Activated CD4-positive, alpha-beta T cell treated with anti-CD3 and anti-CD28 coated beads for 36 hours (primary cell): ENCODE measurements at regions of chr2 and their contacts with region 1.

Region 1: GRCh38 chr2:9656270-9656766 is 25.5 kb upstream of the YWHAQ start:
- DNase-seq: peak; percentile 86
- ATAC-seq: peak; percentile 87
- H3K4me3 Mint-ChIP-seq: peak overlapping the region; percentile 26
- H3K27ac Mint-ChIP-seq: peak overlapping the region; percentile 89
- H3K4me1 Mint-ChIP-seq: peaks cover 37% of the 10 kb centered on the region
- H3K27me3 Mint-ChIP-seq: peaks cover 10% of the 10 kb centered on the region

Region 2: DNA sequence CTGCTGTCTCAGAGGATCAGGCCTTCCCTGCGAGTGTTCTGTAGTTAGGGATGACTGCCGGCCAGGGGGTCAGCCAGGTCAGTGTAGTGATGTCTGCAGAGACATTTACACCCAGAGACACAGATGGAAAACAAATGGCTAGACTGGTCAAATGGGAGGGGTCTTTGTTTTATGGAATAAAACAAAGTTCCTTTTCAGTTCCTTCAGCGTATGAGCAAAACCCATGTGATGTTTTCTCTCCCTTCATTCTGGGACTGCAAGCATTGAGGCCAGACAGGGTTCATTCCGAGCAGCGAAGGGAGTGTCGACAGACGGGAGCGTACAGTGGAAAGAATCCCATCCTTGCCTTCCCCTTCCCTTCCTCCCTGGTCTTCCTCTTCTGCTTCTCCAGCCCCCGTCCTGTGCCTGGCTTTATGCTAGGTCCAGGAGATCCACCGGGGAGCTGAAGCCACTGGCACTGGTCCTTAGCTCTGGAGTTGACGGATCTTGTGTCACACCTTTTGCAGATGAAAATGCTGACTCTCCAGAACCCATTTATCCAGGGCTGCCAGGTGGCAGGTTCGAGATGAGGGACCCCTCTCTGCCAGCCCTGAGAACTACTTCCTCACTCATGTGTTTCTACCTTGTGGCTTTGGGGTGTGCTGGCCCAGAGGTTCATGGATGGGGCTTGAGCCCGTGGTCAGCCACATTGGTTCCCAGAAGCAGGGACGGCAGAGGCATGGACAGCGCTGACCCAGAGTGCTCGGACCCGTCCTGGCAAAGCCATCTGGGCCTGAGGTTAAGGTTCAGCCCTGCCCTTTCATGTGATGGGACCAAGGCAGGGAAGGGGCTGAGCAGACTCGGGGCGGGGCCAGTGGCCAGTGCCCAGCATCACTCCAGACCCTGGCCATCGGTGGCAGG is 257.2 kb before region 1 on chr2:
- CTCF ChIA-PET with region 1: no interaction called
- POLR2A ChIA-PET with region 1: no interaction called
- intact Hi-C with region 1: no loop called
- DNase-seq: no peak
- ATAC-seq: no peak
- H3K4me3 Mint-ChIP-seq: no peak overlapping the region
- H3K27ac Mint-ChIP-seq: no peak overlapping the region
- H3K4me1 Mint-ChIP-seq: peaks cover 4% of the 10 kb centered on the region
- H3K27me3 Mint-ChIP-seq: no peaks in the 10 kb centered on the region

Region 3: DNA sequence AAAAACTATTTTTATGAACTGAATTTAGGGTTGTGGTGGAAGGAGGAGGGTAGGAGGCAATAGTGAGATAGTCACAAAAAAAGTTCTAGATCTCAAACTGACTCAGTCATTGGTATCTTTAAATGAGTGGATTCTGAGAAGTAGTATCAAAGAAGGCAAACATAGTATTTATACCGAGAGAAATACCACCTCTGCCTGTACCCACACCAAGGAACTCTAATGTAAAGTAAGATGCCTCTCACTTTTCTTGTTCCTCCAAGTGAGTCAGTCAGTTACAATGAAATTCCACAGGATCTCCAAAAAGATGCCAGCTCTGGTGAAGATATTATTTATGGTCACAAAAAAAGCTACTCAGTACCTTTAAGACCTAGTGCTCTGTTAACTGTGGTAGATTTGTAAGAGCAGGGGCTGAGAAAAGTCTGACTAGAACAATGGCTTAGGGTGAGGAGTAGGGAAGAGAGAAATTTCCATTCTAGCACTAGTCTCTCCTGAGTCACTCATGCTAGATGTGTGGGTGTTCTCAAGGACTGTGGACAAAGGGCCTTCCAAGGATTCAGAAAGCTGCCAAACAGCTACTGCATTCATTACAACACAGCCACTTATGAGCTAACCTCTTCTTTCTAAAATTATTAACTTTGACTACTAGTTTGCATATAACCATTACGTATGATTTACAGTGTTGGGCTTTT is 61.8 kb before region 1 on chr2:
- CTCF ChIA-PET with region 1: no interaction called
- POLR2A ChIA-PET with region 1: interaction called, 8 read pairs
- intact Hi-C with region 1: loop called (anchors 1 kb)
- DNase-seq: peak; percentile 21
- ATAC-seq: peak; percentile 89
- H3K4me3 Mint-ChIP-seq: no peak overlapping the region
- H3K27ac Mint-ChIP-seq: peak overlapping the region; percentile 82
- H3K4me1 Mint-ChIP-seq: peaks cover 83% of the 10 kb centered on the region
- H3K27me3 Mint-ChIP-seq: no peaks in the 10 kb centered on the region

Region 4: DNA sequence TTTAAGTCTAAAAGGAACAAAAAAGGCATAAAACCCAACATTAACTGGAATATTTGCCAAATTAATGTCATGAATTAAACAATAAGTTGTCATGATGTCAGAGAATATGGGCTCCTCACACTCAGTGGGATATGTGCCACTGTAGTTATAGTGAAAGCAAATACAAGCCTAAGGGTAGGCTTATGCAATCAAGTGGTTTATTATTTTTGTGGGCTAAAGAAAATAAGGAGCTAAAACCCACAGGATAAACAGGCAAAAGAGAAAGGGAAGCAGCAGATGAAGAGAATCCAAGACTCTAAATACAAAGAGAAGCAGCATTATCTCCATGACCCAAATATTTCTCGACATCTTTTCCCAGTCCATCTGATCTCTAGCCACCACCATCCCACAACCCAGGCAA is 43.0 kb before region 1 on chr2:
- CTCF ChIA-PET with region 1: interaction called, 3 read pairs
- POLR2A ChIA-PET with region 1: interaction called, 6 read pairs
- intact Hi-C with region 1: loop called (anchors 1 kb)
- DNase-seq: no peak
- ATAC-seq: no peak
- H3K4me3 Mint-ChIP-seq: no peak overlapping the region
- H3K27ac Mint-ChIP-seq: peak overlapping the region; percentile 27
- H3K4me1 Mint-ChIP-seq: peaks cover 95% of the 10 kb centered on the region
- H3K27me3 Mint-ChIP-seq: no peaks in the 10 kb centered on the region

Region 5: GRCh38 chr2:9641641-9642040 is 14.7 kb before region 1 on chr2:
- CTCF ChIA-PET with region 1: no interaction called
- POLR2A ChIA-PET with region 1: interaction called, 10 read pairs
- intact Hi-C with region 1: loop called (anchors 1 to 2 kb)
- DNase-seq: peak; percentile 63
- ATAC-seq: peak; percentile 88
- H3K4me3 Mint-ChIP-seq: no peak overlapping the region
- H3K27ac Mint-ChIP-seq: no peak overlapping the region
- H3K4me1 Mint-ChIP-seq: peaks cover 21% of the 10 kb centered on the region
- H3K27me3 Mint-ChIP-seq: peaks cover 2% of the 10 kb centered on the region

Region 6: GRCh38 chr2:9668722-9669340 is 12.5 kb after region 1 on chr2:
- CTCF ChIA-PET with region 1: no interaction called
- POLR2A ChIA-PET with region 1: no interaction called
- intact Hi-C with region 1: loop called in 1 of 2 experiments (anchors 1 kb)
- DNase-seq: no peak
- ATAC-seq: no peak
- H3K4me3 Mint-ChIP-seq: no peak overlapping the region
- H3K27ac Mint-ChIP-seq: no peak overlapping the region
- H3K4me1 Mint-ChIP-seq: peaks cover 2% of the 10 kb centered on the region
- H3K27me3 Mint-ChIP-seq: no peaks in the 10 kb centered on the region

Region 7: GRCh38 chr2:9703085-9703641 is 46.8 kb after region 1 on chr2:
- CTCF ChIA-PET with region 1: interaction called, 3 read pairs
- POLR2A ChIA-PET with region 1: interaction called, 11 read pairs
- intact Hi-C with region 1: loop called (anchors 1 kb)
- DNase-seq: peak; percentile 91
- ATAC-seq: peak; percentile 96
- H3K4me3 Mint-ChIP-seq: no peak overlapping the region
- H3K27ac Mint-ChIP-seq: peak overlapping the region; percentile 37
- H3K4me1 Mint-ChIP-seq: peaks cover 42% of the 10 kb centered on the region
- H3K27me3 Mint-ChIP-seq: no peaks in the 10 kb centered on the region

Region 8: GRCh38 chr2:9708683-9709538 is 52.6 kb after region 1 on chr2:
- CTCF ChIA-PET with region 1: interaction called, 4 read pairs
- POLR2A ChIA-PET with region 1: interaction called, 11 read pairs
- intact Hi-C with region 1: loop called (anchors 1 kb)
- DNase-seq: peak; percentile 71
- ATAC-seq: peak; percentile 63
- H3K4me3 Mint-ChIP-seq: peak overlapping the region; percentile 10
- H3K27ac Mint-ChIP-seq: peak overlapping the region; percentile 92
- H3K4me1 Mint-ChIP-seq: peaks cover 56% of the 10 kb centered on the region
- H3K27me3 Mint-ChIP-seq: no peaks in the 10 kb centered on the region

Region 9: GRCh38 chr2:9843229-9844035 is 187.1 kb after region 1 on chr2 and contains the start of gene TAF1B:
- CTCF ChIA-PET with region 1: no interaction called
- POLR2A ChIA-PET with region 1: no interaction called
- intact Hi-C with region 1: no loop called
- DNase-seq: peak; percentile 93
- ATAC-seq: peak; percentile 80
- H3K4me3 Mint-ChIP-seq: peak within 1 kb of the TSS; percentile 89
- H3K27ac Mint-ChIP-seq: peak within 1 kb of the TSS; percentile 85
- H3K4me1 Mint-ChIP-seq: peaks cover 37% of the 10 kb centered on the region
- H3K27me3 Mint-ChIP-seq: no peaks in the 10 kb centered on the region
- total RNA-seq, gene TAF1B: 28.7 to 28.8 TPM